AG04450 (cell line): ENCODE measurements at regions of chr7 and their contacts with region 1.

Region 1: DNA sequence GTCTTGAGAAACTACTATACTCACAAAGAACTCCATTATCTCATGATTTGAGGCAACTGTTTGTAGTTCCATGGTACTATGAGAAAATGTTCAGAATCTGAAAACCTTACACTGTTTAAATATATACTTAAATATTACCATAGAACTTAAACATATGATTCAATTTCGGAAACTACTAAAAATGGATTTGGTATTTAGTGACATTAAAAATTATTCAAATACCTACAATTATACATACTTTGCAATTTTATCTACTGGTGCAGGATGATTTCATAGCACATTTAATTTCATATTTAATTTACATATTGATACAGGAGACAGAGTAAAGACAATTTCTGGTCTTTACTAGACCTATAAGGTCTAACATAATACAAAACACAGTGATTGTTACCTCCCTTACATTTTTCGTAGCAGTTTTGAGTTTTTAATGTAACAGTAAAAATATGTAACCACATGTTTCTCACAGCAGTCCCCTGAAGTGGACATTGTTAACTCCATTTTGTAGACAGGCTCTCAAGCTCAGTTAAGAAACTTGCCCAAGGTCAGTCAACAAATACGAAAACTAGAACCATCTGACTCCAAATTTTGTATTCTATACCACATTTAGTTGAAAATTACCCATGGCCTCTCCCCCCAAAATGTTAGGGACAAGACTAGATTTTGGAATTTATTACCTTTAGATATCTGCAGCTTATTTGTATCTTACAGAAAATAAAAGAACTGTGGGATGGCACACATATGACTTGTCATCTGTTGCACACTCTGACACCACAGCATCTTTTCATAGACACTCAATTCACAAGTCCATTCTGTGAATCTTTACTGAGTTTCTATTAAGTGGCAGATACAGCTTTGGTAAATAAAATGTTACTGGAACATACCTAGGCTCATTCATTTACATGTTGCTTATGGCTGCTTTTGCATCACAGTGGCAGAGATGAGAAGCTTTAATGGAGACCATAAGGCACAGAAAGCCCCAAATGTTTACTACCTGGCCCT is 36.8 kb downstream of the MTPN start:
- DNase-seq: no peak
- H3K4me3 ChIP-seq: no peak overlapping the region
- H3K27ac ChIP-seq: no peak overlapping the region
- H3K27me3 ChIP-seq: no peaks in the 10 kb centered on the region
- CTCF ChIP-seq: no peak

Region 2: DNA sequence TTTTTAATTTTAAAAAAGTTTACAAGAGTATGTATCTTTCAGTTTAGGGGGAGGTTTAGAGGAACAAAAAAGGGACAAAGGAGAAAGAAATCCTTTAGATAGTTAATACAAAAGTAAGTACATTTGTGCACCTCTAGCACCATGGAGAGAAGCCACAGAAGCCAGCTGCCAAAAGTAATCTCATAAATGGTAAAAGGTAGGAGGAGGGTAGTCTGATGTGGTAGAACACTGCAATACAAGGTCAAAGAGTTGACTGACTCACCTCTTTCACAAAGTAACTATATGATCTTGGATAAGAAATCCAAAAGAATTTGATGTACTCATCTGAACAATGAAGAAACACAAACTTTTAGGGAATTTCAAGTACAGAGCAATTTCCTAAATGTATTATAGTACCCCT is 498.6 kb before region 1 on chr7:
- CTCF ChIA-PET with region 1: no interaction called
- POLR2A ChIA-PET with region 1: no interaction called
- DNase-seq: peak; percentile 8
- H3K4me3 ChIP-seq: no peak overlapping the region
- H3K27ac ChIP-seq: no peak overlapping the region
- H3K27me3 ChIP-seq: no peaks in the 10 kb centered on the region
- CTCF ChIP-seq: no peak

Region 3: DNA sequence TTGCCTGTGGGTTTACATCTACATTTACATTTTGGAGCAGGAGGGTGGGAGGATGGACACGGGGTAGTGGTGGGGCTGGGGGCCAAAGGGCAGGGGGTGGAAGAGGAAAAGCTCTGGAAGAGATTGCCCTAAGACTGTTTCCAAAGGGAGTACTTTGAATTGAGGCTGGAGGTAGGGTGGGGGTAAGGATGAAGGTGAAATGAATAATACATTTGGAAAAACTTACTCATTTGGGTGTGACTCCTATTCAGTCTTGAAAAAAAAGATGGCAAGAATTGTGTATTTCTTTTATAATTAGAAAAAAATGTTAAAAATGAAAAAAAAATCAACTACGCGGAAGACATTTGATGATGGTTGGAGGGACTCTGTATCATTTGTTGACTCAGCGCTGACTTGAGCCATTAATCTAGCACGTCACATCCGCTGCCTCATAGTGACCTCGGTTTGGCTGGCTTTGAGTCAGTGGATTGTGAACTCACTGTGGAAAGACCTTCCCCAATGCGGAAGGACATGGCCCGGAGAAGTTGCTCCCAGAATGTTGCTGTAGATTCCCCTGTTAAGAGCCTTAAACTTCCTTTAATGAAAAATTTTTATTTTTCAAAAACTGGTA is 194.6 kb before region 1 on chr7:
- CTCF ChIA-PET with region 1: no interaction called
- POLR2A ChIA-PET with region 1: no interaction called
- DNase-seq: peak; percentile 86
- H3K4me3 ChIP-seq: peak overlapping the region; percentile 20; the same call in 1 of the 2 replicates
- H3K27ac ChIP-seq: peak overlapping the region; percentile 90
- H3K27me3 ChIP-seq: no peaks in the 10 kb centered on the region
- CTCF ChIP-seq: no peak

Region 4: GRCh38 chr7:135925210-135925609 is 15.2 kb before region 1 on chr7:
- CTCF ChIA-PET with region 1: interaction called, 3 read pairs
- POLR2A ChIA-PET with region 1: interaction called, 10 read pairs
- DNase-seq: no peak
- H3K4me3 ChIP-seq: no peak overlapping the region
- H3K27ac ChIP-seq: no peak overlapping the region
- H3K27me3 ChIP-seq: no peaks in the 10 kb centered on the region
- CTCF ChIP-seq: no peak

Region 5: DNA sequence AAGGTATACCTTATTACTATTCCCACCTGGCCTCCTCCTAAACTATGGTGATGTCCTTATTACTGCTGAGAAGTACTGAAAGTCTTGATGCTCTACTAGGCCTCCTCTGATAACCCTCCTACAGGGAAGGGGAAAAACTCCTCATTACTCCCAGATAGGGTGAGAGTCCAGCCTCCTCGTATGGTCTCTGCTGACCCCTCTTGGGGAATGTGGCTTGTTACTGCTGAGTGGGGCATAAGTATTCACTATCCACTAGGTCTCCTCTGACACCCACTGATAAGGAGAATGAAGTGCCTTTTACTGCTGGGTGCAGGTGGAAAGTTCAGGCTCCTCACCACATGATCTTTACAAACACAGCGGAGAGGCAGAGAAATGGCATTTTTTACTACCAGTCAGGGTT is 1151.0 kb after region 1 on chr7:
- CTCF ChIA-PET with region 1: no interaction called
- POLR2A ChIA-PET with region 1: no interaction called
- DNase-seq: no peak
- H3K4me3 ChIP-seq: no peak overlapping the region
- H3K27ac ChIP-seq: no peak overlapping the region
- H3K27me3 ChIP-seq: no peaks in the 10 kb centered on the region
- CTCF ChIP-seq: peak; percentile 50